CD8-positive, alpha-beta T cell (primary cell): ENCODE measurements at regions of chr11 and their contacts with region 1.

Region 1: GRCh38 chr11:134207538-134208239 is 16.1 kb downstream of the NCAPD3 start:
- DNase-seq: peak; percentile 37 to 76 (median 69)
- ATAC-seq: peak; percentile 36
- H3K4me3 ChIP-seq: no peak overlapping the region
- H3K4me3 Mint-ChIP-seq: no peak overlapping the region
- H3K27ac ChIP-seq: no peak overlapping the region
- H3K27ac Mint-ChIP-seq: no peak overlapping the region
- H3K4me1 ChIP-seq: no peaks in the 10 kb centered on the region
- H3K4me1 Mint-ChIP-seq: peaks cover 2% of the 10 kb centered on the region
- H3K27me3 ChIP-seq: no peaks in the 10 kb centered on the region
- H3K27me3 Mint-ChIP-seq: no peaks in the 10 kb centered on the region
- CTCF ChIP-seq: peak; percentile 92

Region 2: DNA sequence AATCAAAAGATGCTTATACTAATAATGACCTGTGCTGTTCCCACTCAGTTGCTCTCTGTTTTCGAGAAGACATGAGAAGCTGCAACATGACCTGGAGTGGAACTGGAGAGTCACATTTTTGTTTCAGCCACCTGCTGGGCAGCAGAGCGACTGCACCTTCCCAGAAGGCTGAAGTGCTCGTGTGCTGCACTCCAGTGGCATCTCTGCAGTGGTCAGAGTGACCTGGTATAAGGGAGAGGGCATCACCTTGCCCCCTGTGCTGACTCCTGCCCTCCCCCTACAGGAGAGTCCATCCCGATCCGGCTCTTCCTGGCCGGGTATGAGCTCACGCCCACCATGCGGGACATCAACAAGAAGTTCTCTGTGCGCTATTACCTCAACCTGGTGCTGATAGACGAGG is 37.0 kb after region 1 on chr11:
- CTCF ChIA-PET with region 1: interaction called, 16 read pairs
- POLR2A ChIA-PET with region 1: no interaction called
- intact Hi-C with region 1: loop called (anchors 1 kb)
- DNase-seq: peak in 4 of 9 experiments; percentile 30 to 59 (median 41)
- ATAC-seq: peak; percentile 81
- H3K4me3 ChIP-seq: no peak overlapping the region
- H3K4me3 Mint-ChIP-seq: no peak overlapping the region
- H3K27ac ChIP-seq: no peak overlapping the region
- H3K27ac Mint-ChIP-seq: peak overlapping the region; percentile 24
- H3K4me1 ChIP-seq: no peaks in the 10 kb centered on the region
- H3K4me1 Mint-ChIP-seq: no peaks in the 10 kb centered on the region
- H3K27me3 ChIP-seq: no peaks in the 10 kb centered on the region
- H3K27me3 Mint-ChIP-seq: no peaks in the 10 kb centered on the region
- CTCF ChIP-seq: peak; percentile 32

Region 3: GRCh38 chr11:134275534-134276395 is 68.1 kb after region 1 on chr11 and contains the start of gene GLB1L3:
- CTCF ChIA-PET with region 1: interaction called, 9 read pairs
- POLR2A ChIA-PET with region 1: interaction called, 4 read pairs
- intact Hi-C with region 1: loop called (anchors 1 kb)
- DNase-seq: peak; percentile 54 to 88 (median 78)
- ATAC-seq: peak; percentile 92
- H3K4me3 ChIP-seq: peak within 1 kb of the TSS; percentile 64 to 65
- H3K4me3 Mint-ChIP-seq: peak within 1 kb of the TSS; percentile 90
- H3K27ac ChIP-seq: peak within 1 kb of the TSS; percentile 32 to 63
- H3K27ac Mint-ChIP-seq: peak within 1 kb of the TSS; percentile 81
- H3K4me1 ChIP-seq: peaks cover 27% of the 10 kb centered on the region
- H3K4me1 Mint-ChIP-seq: peaks cover 46% of the 10 kb centered on the region
- H3K27me3 ChIP-seq: peaks cover 0 to 3% of the 10 kb centered on the region in 2 experiments
- H3K27me3 Mint-ChIP-seq: peaks cover 8% of the 10 kb centered on the region
- CTCF ChIP-seq: peak; percentile 65
- total RNA-seq, gene GLB1L3: 0.58 to 0.87 TPM

Region 4: DNA sequence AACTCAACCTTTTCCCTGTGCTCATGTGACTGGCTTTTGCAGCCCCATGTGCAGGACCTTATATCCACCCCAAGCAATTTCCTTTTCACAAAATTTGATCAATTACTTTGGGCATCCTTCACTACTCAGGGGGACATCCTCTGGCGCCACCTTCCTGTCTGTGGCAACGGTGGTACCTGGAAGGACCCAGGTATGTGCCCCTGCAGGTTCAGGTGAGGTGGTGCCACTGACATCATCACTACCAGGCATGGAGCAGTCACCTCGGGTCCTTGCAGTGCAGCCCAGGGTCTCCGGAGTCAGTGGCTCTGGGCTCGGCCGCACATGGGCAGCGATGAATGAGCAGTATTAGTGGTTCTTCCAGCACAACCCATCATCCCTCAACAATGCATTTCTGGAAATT is 242.0 kb after region 1 on chr11:
- CTCF ChIA-PET with region 1: no interaction called
- POLR2A ChIA-PET with region 1: no interaction called
- intact Hi-C with region 1: loop called in 1 of 2 experiments (anchors 5 kb)
- DNase-seq: peak in 2 of 9 experiments; percentile 25 to 41
- ATAC-seq: no peak
- H3K4me3 ChIP-seq: no peak overlapping the region
- H3K4me3 Mint-ChIP-seq: no peak overlapping the region
- H3K27ac ChIP-seq: no peak overlapping the region
- H3K27ac Mint-ChIP-seq: no peak overlapping the region
- H3K4me1 ChIP-seq: no peaks in the 10 kb centered on the region
- H3K4me1 Mint-ChIP-seq: no peaks in the 10 kb centered on the region
- H3K27me3 ChIP-seq: no peaks in the 10 kb centered on the region
- H3K27me3 Mint-ChIP-seq: peaks cover 7% of the 10 kb centered on the region
- CTCF ChIP-seq: no peak